H1 (cell line): ENCODE measurements at regions of chr1 and their contacts with region 1.

Region 1: DNA sequence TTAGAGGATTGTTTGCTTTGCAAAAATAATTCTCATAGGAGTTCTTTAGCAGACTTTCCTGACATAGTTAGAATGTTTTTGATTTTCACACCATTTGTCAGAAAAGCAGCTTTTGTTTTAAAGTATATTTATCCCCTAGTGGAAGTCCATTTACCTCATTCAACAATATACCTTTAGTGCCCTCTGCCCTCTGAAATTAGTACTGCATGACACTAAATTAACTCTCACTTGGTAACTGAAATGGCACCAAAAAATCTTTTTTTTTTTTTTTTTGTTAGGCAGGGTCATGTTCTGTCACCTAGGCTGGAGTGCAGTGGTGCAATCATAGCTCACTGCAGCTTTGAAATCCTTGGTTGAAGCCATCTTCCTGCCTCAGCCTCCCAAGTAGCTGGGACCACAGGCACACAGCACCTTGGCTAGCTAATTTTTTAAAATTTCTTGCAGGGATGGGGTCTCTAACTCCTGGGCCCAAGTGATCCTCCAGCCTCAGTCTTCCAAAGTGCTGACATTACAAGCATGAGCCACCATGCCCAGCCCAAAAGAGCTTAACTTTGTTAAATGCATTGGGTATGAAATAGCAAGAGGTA is 13.6 kb downstream of the LRRC42 start:
- DNase-seq: no peak
- H3K4me3 ChIP-seq: no peak overlapping the region
- H3K27ac ChIP-seq: no peak overlapping the region
- H3K4me1 ChIP-seq: peaks cover 0 to 10% (median 0%) of the 10 kb centered on the region in 4 experiments; a peak in 4 of 7 replicates
- H3K27me3 ChIP-seq: no peaks in the 10 kb centered on the region
- CTCF ChIP-seq: peak in 2 of 3 experiments; percentile 52 to 58; a peak in 2 of 4 replicates
- EP300 ChIP-seq: no peak
- POLR2A ChIP-seq: no peak
- RAD21 ChIP-seq: peak; percentile 61 to 63

Region 2: GRCh38 chr1:53860967-53861411 is 98.8 kb before region 1 on chr1:
- CTCF ChIA-PET with region 1: interaction called, 114 read pairs
- POLR2A ChIA-PET with region 1: interaction called, 4 read pairs
- DNase-seq: peak in 1 of 2 experiments; percentile 58
- H3K4me3 ChIP-seq: no peak overlapping the region; a peak in 1 of 8 replicates
- H3K27ac ChIP-seq: no peak overlapping the region
- H3K4me1 ChIP-seq: peaks cover 0 to 3% (median 0%) of the 10 kb centered on the region in 4 experiments; a peak in 1 of 7 replicates
- H3K27me3 ChIP-seq: no peaks in the 10 kb centered on the region
- CTCF ChIP-seq: peak; percentile 46 to 93 (median 85)
- EP300 ChIP-seq: no peak
- POLR2A ChIP-seq: no peak
- RAD21 ChIP-seq: peak; percentile 91 to 92

Region 3: GRCh38 chr1:53878492-53879105 is 81.2 kb before region 1 on chr1:
- CTCF ChIA-PET with region 1: interaction called, 28 read pairs
- POLR2A ChIA-PET with region 1: no interaction called
- DNase-seq: no peak
- H3K4me3 ChIP-seq: no peak overlapping the region
- H3K27ac ChIP-seq: no peak overlapping the region
- H3K4me1 ChIP-seq: no peaks in the 10 kb centered on the region
- H3K27me3 ChIP-seq: no peaks in the 10 kb centered on the region
- CTCF ChIP-seq: peak in 2 of 3 experiments; percentile 41 to 56; a peak in 2 of 4 replicates
- EP300 ChIP-seq: no peak
- POLR2A ChIP-seq: no peak
- RAD21 ChIP-seq: peak; percentile 53 to 55

Region 4: GRCh38 chr1:53971718-53972117 is 12.0 kb after region 1 on chr1:
- CTCF ChIA-PET with region 1: interaction called, 19 read pairs
- POLR2A ChIA-PET with region 1: interaction called, 3 read pairs
- DNase-seq: no peak
- H3K4me3 ChIP-seq: no peak overlapping the region
- H3K27ac ChIP-seq: no peak overlapping the region
- H3K4me1 ChIP-seq: no peaks in the 10 kb centered on the region
- H3K27me3 ChIP-seq: no peaks in the 10 kb centered on the region
- CTCF ChIP-seq: no peak
- EP300 ChIP-seq: no peak
- POLR2A ChIP-seq: no peak
- RAD21 ChIP-seq: no peak

Region 5: DNA sequence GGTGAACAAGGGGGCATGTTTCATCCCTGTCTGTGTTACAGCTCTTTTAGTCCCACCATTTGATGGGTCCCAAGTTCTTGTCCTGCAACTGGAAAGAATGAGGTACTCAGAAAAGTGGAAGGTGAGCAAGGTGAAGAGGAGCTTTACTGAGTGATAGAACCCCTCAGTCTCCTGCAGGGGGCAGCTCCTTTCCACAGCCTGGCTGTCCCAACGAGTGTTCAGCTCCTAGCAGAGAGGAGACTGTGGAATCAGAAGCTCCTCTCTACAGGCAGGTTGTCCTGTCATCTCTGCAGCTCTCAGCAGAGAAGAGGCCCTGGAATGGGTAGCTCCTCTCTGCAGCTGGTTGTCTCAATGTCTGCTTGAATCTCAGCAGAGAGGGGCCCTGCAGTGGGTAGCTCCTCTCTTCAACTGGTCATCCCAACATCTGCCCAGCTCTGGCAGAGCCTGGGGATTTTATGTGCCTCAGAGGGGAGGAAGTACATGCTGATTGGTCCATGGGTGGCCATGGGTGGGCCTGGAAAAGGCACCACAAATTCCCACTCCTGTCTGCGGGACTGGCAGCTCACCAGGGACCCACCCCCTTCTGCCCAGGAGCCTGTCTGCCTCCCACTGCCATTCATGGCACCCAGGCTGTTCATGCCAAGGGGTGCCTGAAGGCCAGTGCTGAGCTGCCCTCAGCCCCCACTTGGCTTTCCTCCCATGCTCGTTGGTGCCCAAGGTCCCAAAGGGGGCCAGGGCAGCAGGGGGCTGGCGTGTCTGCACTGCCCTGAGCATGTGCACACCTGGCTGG is 32.5 kb after region 1 on chr1:
- CTCF ChIA-PET with region 1: interaction called, 15 read pairs
- POLR2A ChIA-PET with region 1: no interaction called
- DNase-seq: no peak
- H3K4me3 ChIP-seq: no peak overlapping the region
- H3K27ac ChIP-seq: no peak overlapping the region
- H3K4me1 ChIP-seq: no peaks in the 10 kb centered on the region
- H3K27me3 ChIP-seq: no peaks in the 10 kb centered on the region
- CTCF ChIP-seq: peak; percentile 59 to 80 (median 60)
- EP300 ChIP-seq: no peak
- POLR2A ChIP-seq: no peak
- RAD21 ChIP-seq: peak; percentile 76 to 78